ENCODE measurements at regions of chr18 and their contacts with region 1.

Region 1: DNA sequence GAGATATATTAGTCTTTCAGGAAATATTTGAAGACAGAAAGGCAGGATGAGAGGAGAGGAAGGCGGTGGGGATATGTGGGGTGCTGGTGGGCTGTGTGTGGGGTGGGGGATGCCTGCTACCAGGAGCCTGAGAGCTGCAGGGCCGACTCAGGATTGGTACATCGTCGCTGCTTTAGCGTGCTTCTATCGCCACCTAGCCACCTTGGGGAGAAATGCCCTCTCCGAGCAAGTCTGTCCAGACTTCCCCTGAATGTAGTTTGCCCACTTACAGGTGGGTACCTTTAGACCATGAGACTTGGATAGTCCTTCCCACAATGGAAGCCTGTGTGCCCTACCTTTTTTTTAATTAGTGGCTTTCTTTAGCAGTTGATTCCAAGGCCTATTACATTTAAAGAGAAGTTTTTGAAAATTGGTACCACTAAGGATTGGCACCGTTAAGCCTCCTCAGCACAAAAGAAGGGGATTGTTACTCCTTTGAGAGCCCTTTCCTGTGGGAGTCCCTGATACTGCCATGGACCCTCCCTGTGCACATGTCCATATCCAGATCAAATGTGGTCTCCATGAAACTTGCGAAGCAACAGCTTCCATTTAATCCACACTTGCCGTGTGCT is 114.1 kb upstream of the NDUFV2 start:
- DNase-seq: peak; percentile 41 to 65
- ATAC-seq: peak; percentile 94 to 97
- H3K4me3 ChIP-seq: no peak overlapping the region
- H3K27ac ChIP-seq: peak overlapping the region; percentile 41 to 62; a peak in 4 of 6 replicates
- H3K4me1 ChIP-seq: peaks cover 13% of the 10 kb centered on the region
- CTCF ChIP-seq: peak; percentile 67
- EP300 ChIP-seq: no peak
- POLR2A ChIP-seq: no peak
- RAD21 ChIP-seq: peak; percentile 88 to 92

Region 2: GRCh38 chr18:8654503-8655451 is 333.6 kb before region 1 on chr18:
- CTCF ChIA-PET with region 1: interaction called, 70 read pairs
- POLR2A ChIA-PET with region 1: no interaction called
- DNase-seq: peak; percentile 22 to 43
- ATAC-seq: peak in 1 of 2 experiments; percentile 39; a peak in 1 of 6 replicates
- H3K4me3 ChIP-seq: no peak overlapping the region
- H3K27ac ChIP-seq: peak overlapping the region; percentile 26 to 72; a peak in 4 of 6 replicates
- H3K4me1 ChIP-seq: peaks cover 19% of the 10 kb centered on the region
- CTCF ChIP-seq: peak; percentile 86
- EP300 ChIP-seq: no peak
- POLR2A ChIP-seq: no peak
- RAD21 ChIP-seq: peak; percentile 81 to 83

Region 3: DNA sequence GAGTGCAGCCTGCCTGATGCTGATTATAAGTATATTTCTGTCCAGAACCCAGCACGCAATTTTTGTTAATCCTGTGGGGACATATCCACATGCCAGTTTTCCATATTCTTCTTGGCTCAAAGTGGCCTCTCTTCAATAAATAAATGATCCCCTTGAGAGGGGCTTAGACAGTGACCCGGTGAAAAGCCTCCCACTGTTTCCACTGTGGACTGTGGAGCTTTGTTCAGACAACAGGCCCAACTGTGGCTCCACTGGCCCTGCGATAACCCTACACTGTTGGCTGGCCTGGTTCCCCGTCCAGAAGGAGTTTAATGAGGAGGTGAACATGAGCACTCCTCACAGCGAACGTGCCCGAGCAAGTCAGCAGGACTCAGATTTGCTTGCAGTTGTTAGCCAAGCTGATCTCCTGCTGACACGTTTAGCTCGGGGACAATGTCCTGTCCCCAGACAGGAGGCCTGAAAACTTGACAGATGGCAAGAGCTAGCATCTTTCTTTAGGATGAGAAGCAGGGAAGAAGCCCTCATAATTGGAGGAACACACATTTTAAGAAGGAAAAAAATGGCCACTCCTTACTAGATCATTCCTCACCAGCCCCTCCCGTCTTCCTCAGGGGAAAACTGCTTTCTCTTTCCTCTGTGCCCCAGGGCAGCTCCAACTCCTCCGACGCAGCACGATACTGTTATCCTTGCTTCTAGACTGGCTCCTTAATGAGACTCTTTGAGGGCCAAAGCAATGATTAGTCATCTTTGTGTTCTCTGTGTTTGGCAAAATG is 303.0 kb before region 1 on chr18:
- CTCF ChIA-PET with region 1: interaction called, 14 read pairs
- POLR2A ChIA-PET with region 1: no interaction called
- DNase-seq: no peak
- ATAC-seq: no peak
- H3K4me3 ChIP-seq: no peak overlapping the region
- H3K27ac ChIP-seq: 0 out of 6 replicates have a peak overlapping the region, but pooled peaks of 1 of the 2 experiments have one; percentile 11
- H3K4me1 ChIP-seq: no peaks in the 10 kb centered on the region
- CTCF ChIP-seq: no peak
- EP300 ChIP-seq: no peak
- POLR2A ChIP-seq: no peak
- RAD21 ChIP-seq: no peak

Region 4: DNA sequence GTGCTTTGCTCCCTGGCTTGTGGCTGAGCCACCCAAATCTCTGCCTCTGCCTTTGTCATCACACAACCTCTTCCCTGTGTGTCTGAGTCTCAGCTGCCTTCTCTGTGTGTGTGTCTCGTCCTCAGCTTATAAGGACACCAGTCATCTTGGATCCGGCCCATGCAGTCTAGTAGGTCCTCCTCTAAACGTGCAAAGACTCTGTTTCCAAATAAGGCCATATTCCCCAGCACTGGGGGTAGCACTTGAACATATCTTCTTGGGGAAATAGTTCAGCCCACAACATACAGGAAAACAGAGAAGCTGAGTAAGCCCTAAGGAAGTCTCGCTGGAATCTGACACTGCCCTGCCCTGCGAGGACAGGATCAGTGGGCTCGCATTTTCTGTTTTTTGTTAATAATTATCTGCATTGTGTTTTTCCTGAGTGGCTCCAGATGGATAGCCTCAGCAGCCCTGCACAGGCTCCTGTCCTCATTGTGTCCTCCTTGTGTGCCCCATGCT is 240.9 kb before region 1 on chr18:
- CTCF ChIA-PET with region 1: interaction called, 11 read pairs
- POLR2A ChIA-PET with region 1: no interaction called
- DNase-seq: peak in 1 of 2 experiments; percentile 54
- ATAC-seq: peak; percentile 37 to 75; a peak in 5 of 6 replicates
- H3K4me3 ChIP-seq: no peak overlapping the region
- H3K27ac ChIP-seq: peak overlapping the region; percentile 70 to 85
- H3K4me1 ChIP-seq: peaks cover 98% of the 10 kb centered on the region
- CTCF ChIP-seq: no peak
- EP300 ChIP-seq: no peak
- POLR2A ChIP-seq: no peak
- RAD21 ChIP-seq: no peak

Region 5: GRCh38 chr18:8998481-8999217 is 10.3 kb after region 1 on chr18:
- CTCF ChIA-PET with region 1: interaction called, 20 read pairs
- POLR2A ChIA-PET with region 1: no interaction called
- DNase-seq: no peak
- ATAC-seq: no peak
- H3K4me3 ChIP-seq: no peak overlapping the region
- H3K27ac ChIP-seq: peak overlapping the region; percentile 18 to 38; a peak in 3 of 6 replicates
- H3K4me1 ChIP-seq: peaks cover 24% of the 10 kb centered on the region
- CTCF ChIP-seq: no peak
- EP300 ChIP-seq: no peak
- POLR2A ChIP-seq: no peak
- RAD21 ChIP-seq: no peak

Region 6: DNA sequence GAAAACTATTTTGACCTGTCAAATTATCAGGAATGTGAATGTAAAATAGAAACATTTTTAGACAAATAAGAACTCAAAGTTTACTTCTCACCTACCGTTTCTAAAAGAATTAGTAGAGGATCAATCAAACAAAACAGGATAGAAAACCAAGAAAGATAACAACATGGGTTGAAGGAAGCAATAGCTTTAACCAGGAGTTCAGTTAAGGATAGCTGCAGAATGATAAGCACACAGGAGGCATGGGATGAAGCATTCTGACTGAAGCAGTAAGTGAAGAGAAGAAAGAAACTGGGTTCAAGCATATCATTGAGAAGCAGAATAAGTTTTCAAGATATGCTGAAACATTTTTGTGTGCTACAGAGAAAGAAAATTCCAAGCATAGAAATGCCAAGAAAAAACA is 398.5 kb after region 1 on chr18:
- CTCF ChIA-PET with region 1: no interaction called
- POLR2A ChIA-PET with region 1: no interaction called
- DNase-seq: no peak
- ATAC-seq: no peak
- H3K4me3 ChIP-seq: no peak overlapping the region
- H3K27ac ChIP-seq: no peak overlapping the region
- H3K4me1 ChIP-seq: no peaks in the 10 kb centered on the region
- CTCF ChIP-seq: no peak
- EP300 ChIP-seq: no peak
- POLR2A ChIP-seq: no peak
- RAD21 ChIP-seq: no peak